H1 (cell line): ENCODE measurements at regions of chr4 and their contacts with region 1.

Region 1: GRCh38 chr4:7719354-7720174 is 220.1 kb downstream of the AFAP1 start:
- DNase-seq: peak; percentile 25 to 96
- H3K4me3 ChIP-seq: peak overlapping the region in 1 of 4 experiments; percentile 17; a peak in 1 of 8 replicates
- H3K27ac ChIP-seq: no peak overlapping the region
- H3K4me1 ChIP-seq: peaks cover 0 to 2% (median 0%) of the 10 kb centered on the region in 4 experiments; a peak in 2 of 7 replicates
- H3K27me3 ChIP-seq: peaks cover 0 to 4% (median 2%) of the 10 kb centered on the region in 4 experiments; a peak in 3 of 7 replicates
- CTCF ChIP-seq: peak in 2 of 3 experiments; percentile 78 to 85; a peak in 3 of 4 replicates
- EP300 ChIP-seq: no peak; a peak in 1 of 3 replicates
- POLR2A ChIP-seq: no peak
- RAD21 ChIP-seq: peak; percentile 85 to 92

Region 2: DNA sequence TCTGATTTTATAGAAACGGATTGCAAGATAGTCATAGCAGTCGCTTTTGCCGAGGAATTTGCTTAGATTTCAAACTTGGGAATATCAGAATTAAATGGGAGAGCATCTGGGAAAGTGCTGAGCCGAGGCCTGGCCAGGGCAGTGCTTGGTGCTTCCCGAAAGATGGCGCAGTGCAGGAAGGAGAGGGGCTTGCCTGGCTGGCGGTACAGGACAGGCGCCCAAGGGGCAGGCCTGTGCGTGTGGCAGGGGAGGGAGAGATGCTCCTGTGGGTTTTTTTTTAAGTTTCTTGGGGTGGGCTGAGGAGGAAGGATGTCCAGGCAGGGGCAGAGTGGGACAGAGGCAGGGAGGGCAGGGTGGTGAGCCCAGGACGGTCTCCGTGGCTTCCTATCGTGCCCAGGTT is 21.0 kb before region 1 on chr4:
- CTCF ChIA-PET with region 1: interaction called, 16 read pairs
- POLR2A ChIA-PET with region 1: no interaction called
- DNase-seq: no peak
- H3K4me3 ChIP-seq: no peak overlapping the region
- H3K27ac ChIP-seq: no peak overlapping the region
- H3K4me1 ChIP-seq: peaks cover 0 to 9% (median 6%) of the 10 kb centered on the region in 4 experiments; a peak in 5 of 7 replicates
- H3K27me3 ChIP-seq: no peaks in the 10 kb centered on the region
- CTCF ChIP-seq: peak in 2 of 3 experiments; percentile 21 to 36; a peak in 2 of 4 replicates
- EP300 ChIP-seq: no peak
- POLR2A ChIP-seq: no peak
- RAD21 ChIP-seq: peak in 1 of 2 experiments; percentile 33; a peak in 1 of 4 replicates